K562 (cell line): ENCODE measurements at regions of chr13 and their contacts with region 1.

Region 1: DNA sequence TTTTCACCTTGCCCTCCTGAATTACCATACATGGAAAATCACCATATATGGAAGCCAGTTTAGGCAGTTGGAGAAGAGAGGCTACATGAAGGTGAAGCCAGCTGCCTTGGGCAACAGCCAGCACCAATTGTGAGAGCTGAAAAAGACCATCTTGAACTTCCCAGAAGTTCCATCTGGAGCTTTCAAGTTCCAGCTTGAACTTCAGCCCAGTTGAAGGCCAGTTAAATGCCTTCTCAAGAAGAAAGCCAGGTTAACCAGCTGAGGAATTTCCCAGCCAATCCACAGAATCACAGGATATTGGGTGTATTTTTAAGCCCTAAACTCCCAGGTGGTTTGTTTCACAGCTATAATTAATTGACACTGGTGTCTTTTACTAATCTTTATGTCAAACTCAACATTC is 713.6 kb upstream of the MIR17HG start:
- DNase-seq: no peak
- ATAC-seq: no peak
- H3K4me3 ChIP-seq: no peak overlapping the region
- H3K27ac ChIP-seq: no peak overlapping the region
- H3K4me1 ChIP-seq: no peaks in the 10 kb centered on the region
- H3K27me3 ChIP-seq: no peaks in the 10 kb centered on the region
- CTCF ChIP-seq: no peak
- EP300 ChIP-seq: no peak
- POLR2A ChIP-seq: no peak
- RAD21 ChIP-seq: no peak

Region 2: GRCh38 chr13:90577726-90578125 is 56.1 kb before region 1 on chr13:
- CTCF ChIA-PET with region 1: no interaction called
- POLR2A ChIA-PET with region 1: no interaction called
- in situ Hi-C with region 1: no loop called
- intact Hi-C with region 1: loop called (anchors 10 kb)
- DNase-seq: no peak
- ATAC-seq: 0 out of 3 replicates have a peak, but pooled peaks have one; percentile 24
- H3K4me3 ChIP-seq: no peak overlapping the region
- H3K27ac ChIP-seq: no peak overlapping the region
- H3K4me1 ChIP-seq: no peaks in the 10 kb centered on the region
- H3K27me3 ChIP-seq: no peaks in the 10 kb centered on the region
- CTCF ChIP-seq: no peak
- EP300 ChIP-seq: no peak
- POLR2A ChIP-seq: no peak
- RAD21 ChIP-seq: no peak

Region 3: DNA sequence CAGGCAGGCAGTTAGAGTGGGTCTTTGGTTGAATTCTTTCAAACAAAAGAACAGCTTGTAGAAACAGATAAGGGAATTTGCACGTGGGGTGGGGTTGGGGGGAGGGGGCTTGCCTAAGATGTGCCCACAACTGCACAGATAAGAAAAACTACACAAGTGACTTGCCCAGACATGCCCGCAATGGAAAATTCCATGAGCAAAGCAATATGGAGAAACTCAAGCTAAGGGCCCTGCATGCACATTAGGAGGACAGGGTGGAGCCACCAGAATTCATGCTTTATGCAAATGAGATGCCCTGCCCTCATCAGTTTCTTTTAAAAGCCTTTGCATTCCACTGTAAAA is 42.0 kb before region 1 on chr13:
- CTCF ChIA-PET with region 1: no interaction called
- POLR2A ChIA-PET with region 1: no interaction called
- in situ Hi-C with region 1: no loop called
- intact Hi-C with region 1: no loop called
- DNase-seq: peak in 1 of 4 experiments; percentile 23
- ATAC-seq: peak; percentile 50
- H3K4me3 ChIP-seq: no peak overlapping the region
- H3K27ac ChIP-seq: no peak overlapping the region
- H3K4me1 ChIP-seq: no peaks in the 10 kb centered on the region
- H3K27me3 ChIP-seq: no peaks in the 10 kb centered on the region
- CTCF ChIP-seq: no peak
- EP300 ChIP-seq: no peak
- POLR2A ChIP-seq: no peak
- RAD21 ChIP-seq: no peak

Region 4: GRCh38 chr13:90824027-90824426 is 190.2 kb after region 1 on chr13:
- CTCF ChIA-PET with region 1: no interaction called
- POLR2A ChIA-PET with region 1: no interaction called
- in situ Hi-C with region 1: no loop called
- intact Hi-C with region 1: no loop called
- DNase-seq: no peak
- ATAC-seq: no peak
- H3K4me3 ChIP-seq: no peak overlapping the region
- H3K27ac ChIP-seq: no peak overlapping the region
- H3K4me1 ChIP-seq: no peaks in the 10 kb centered on the region
- H3K27me3 ChIP-seq: no peaks in the 10 kb centered on the region
- CTCF ChIP-seq: no peak
- EP300 ChIP-seq: no peak
- POLR2A ChIP-seq: no peak
- RAD21 ChIP-seq: no peak